Panc1 (cell line): ENCODE measurements at regions of chr12 and their contacts with region 1.

Region 1: GRCh38 chr12:49019443-49020324 is 1.1 kb upstream of the PRKAG1 start:
- DNase-seq: no peak
- ATAC-seq: peak; percentile 39; the same call in 1 of the 2 replicates
- H3K4me3 ChIP-seq: no peak overlapping the region
- H3K27ac ChIP-seq: peak overlapping the region; percentile 90
- H3K4me1 ChIP-seq: peaks cover 15% of the 10 kb centered on the region
- H3K27me3 ChIP-seq: no peaks in the 10 kb centered on the region
- CTCF ChIP-seq: no peak; the same call in 1 of the 2 replicates

Region 2: GRCh38 chr12:49030714-49031552 is 11.2 kb after region 1 on chr12:
- CTCF ChIA-PET with region 1: interaction called, 4 read pairs
- POLR2A ChIA-PET with region 1: interaction called, 14 read pairs
- in situ Hi-C with region 1: no loop called
- intact Hi-C with region 1: no loop called
- DNase-seq: no peak
- ATAC-seq: no peak
- H3K4me3 ChIP-seq: no peak overlapping the region
- H3K27ac ChIP-seq: no peak overlapping the region
- H3K4me1 ChIP-seq: no peaks in the 10 kb centered on the region
- H3K27me3 ChIP-seq: no peaks in the 10 kb centered on the region
- CTCF ChIP-seq: no peak

Region 3: DNA sequence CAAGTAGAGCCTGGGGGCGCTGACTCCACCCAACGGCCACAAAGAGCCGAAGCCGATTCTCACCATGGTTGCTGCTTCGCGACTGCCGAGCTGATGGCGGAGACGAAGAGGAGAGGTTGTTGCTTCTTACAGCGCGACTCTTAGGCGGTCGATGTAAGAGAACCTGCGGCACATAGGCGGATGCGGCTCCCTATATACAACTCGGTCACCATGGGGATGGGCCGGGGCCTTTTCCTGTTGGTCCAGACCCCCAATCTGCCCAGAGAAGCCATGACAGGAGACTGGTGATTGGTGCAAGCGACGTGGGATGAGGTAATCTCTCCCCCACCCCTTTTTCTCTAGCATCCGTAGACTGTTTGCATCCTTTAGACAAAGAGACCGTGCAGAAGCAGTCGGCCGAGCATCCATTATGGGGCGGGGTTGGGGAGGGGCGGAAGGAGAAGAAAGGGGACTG is 169.3 kb after region 1 on chr12 and contains the start of gene TUBA1A:
- CTCF ChIA-PET with region 1: interaction called, 10 read pairs
- POLR2A ChIA-PET with region 1: no interaction called
- in situ Hi-C with region 1: no loop called
- intact Hi-C with region 1: no loop called
- DNase-seq: peak; percentile 95
- ATAC-seq: peak; percentile 96
- H3K4me3 ChIP-seq: peak within 1 kb of the TSS; percentile 79 to 90
- H3K27ac ChIP-seq: peak within 1 kb of the TSS; percentile 85
- H3K4me1 ChIP-seq: peaks cover 12% of the 10 kb centered on the region
- H3K27me3 ChIP-seq: no peaks in the 10 kb centered on the region
- CTCF ChIP-seq: no peak
- total RNA-seq, gene TUBA1A: 133 TPM